ENCODE measurements at regions of chr3 and their contacts with region 1.

Region 1: DNA sequence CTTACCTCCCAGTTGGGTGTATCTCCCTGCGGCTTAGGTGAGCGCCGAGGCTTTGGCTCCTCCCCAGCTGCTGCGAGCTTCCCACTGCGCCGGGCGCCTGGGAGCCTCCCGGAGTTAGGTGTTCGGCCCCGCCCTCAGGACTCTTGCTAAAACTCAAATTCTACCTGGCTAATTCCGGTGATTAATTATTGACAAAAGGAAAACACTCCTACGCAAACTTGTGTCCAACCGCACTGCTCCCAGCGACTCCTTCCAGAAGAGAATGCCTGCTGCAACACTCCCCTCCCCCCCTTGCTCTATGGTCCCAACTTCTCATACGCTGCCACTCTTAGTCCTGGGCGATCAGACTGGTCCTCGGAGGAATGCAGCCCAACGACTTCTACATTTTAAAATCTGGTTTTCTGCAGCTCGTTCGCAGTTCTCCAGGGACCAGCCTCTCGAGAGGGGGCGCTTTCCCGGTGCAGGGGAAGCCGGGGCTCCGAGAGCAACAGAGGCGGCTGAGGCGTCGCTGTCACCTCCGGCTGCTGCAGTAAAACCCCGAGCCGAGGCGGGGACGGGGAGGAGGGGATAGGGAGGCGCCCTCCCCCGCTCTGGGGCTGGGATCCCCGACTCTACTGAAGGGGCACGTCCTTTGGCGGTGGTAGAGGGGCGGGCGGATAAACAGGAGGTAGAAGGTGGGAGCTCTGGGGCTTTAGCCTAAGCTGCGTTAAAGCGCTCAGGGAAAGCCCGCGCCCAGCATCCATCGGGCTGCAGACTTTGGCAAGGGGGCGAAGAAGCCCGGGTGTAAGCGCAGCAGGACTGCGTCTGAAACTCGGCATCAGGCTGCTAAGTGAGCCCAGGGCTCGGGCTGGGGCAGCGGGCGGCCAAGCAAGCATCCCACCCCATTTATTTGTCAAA is at the start of gene SPTSSB:
- DNase-seq: peak; percentile 84
- ATAC-seq: peak; percentile 73
- H3K4me3 Mint-ChIP-seq: peak within 1 kb of the TSS; percentile 88
- H3K27ac Mint-ChIP-seq: peak within 1 kb of the TSS; percentile 97
- H3K4me1 Mint-ChIP-seq: peaks cover 57% of the 10 kb centered on the region
- H3K27me3 Mint-ChIP-seq: peaks cover 9% of the 10 kb centered on the region
- CTCF ChIP-seq: no peak
- total RNA-seq, gene SPTSSB: 14.1 to 17.8 TPM (median 15.7 TPM) in 3 replicates

Region 2: GRCh38 chr3:161274719-161275298 is 96.9 kb before region 1 on chr3:
- CTCF ChIA-PET with region 1: interaction called, 17 read pairs
- POLR2A ChIA-PET with region 1: interaction called, 3 read pairs
- DNase-seq: peak; percentile 54
- ATAC-seq: peak; percentile 80
- H3K4me3 Mint-ChIP-seq: no peak overlapping the region
- H3K27ac Mint-ChIP-seq: no peak overlapping the region
- H3K4me1 Mint-ChIP-seq: peaks cover 35% of the 10 kb centered on the region
- H3K27me3 Mint-ChIP-seq: peaks cover 4% of the 10 kb centered on the region; the same call in 1 of the 2 replicates
- CTCF ChIP-seq: peak; percentile 73

Region 3: DNA sequence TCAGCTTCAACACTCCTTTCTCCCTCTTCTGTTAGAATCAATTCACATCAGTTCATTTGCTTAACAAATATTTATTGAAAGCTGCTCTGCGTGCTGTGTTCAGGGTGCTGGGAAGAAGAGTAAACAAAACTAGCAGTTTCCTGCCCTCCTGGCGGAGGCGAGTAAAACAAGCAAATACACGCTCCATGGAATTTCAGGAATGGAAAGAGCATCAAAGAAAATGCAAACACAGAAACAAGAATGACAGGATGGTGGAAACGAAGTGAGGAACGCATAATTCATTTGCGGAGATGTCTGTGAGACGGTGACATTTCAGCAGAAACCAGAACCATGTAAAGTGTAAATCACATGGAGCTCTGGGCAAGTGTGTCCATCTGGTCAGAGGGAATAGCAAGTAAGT is 49.1 kb after region 1 on chr3:
- CTCF ChIA-PET with region 1: interaction called, 11 read pairs
- POLR2A ChIA-PET with region 1: no interaction called
- DNase-seq: peak; percentile 30
- ATAC-seq: peak; percentile 89
- H3K4me3 Mint-ChIP-seq: peak overlapping the region; percentile 50
- H3K27ac Mint-ChIP-seq: peak overlapping the region; percentile 94
- H3K4me1 Mint-ChIP-seq: peaks cover 29% of the 10 kb centered on the region
- H3K27me3 Mint-ChIP-seq: no peaks in the 10 kb centered on the region; the same call in none of the 2 replicates
- CTCF ChIP-seq: no peak

Measured in WTC11 (cell line).